ENCODE measurements at regions of chr2 and their contacts with region 1.

Region 1: GRCh38 chr2:60998628-60999545 is 18.6 kb upstream of the PEX13 start:
- DNase-seq: peak; percentile 78
- ATAC-seq: peak; percentile 64
- H3K4me3 ChIP-seq: no peak overlapping the region
- H3K27ac ChIP-seq: no peak overlapping the region
- H3K4me1 ChIP-seq: 0 out of 2 replicates have a peak, but pooled peaks cover 1% of the 10 kb centered on the region
- H3K27me3 ChIP-seq: no peaks in the 10 kb centered on the region
- CTCF ChIP-seq: peak; percentile 80

Region 2: DNA sequence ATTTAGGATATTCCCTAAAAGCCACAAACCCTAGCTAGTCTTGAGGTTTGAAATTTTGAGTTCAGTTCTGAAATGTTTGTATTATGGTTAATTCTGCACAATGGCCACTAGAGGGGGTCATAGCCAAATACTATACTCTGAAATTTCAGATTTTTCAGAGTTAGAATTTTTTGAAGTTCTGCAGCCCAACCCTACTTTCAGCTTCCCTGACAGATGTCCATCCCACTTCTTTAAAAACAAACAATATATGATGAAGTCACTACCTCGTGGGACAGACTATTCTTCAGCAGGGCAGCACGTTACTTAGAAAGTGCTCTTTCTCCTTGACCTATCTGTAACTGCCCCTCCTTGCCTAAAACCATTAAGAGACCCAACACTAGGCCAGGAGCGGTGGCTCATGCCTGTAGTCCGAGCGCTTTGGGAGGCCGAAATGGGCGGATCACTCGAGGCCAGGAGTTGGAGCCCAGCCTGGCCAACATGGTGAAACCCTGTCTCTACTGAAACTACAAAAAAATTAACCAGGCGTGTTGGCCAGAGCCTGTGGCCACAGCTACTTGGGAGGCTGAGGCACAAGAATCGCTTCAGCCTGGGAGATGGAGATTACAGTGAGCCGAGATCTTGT is 291.0 kb before region 1 on chr2:
- CTCF ChIA-PET with region 1: interaction called, 3 read pairs
- POLR2A ChIA-PET with region 1: no interaction called
- intact Hi-C with region 1: loop called (anchors 1 kb)
- DNase-seq: peak; percentile 69
- ATAC-seq: peak; percentile 40
- H3K4me3 ChIP-seq: no peak overlapping the region
- H3K27ac ChIP-seq: no peak overlapping the region
- H3K4me1 ChIP-seq: no peaks in the 10 kb centered on the region
- H3K27me3 ChIP-seq: no peaks in the 10 kb centered on the region
- CTCF ChIP-seq: peak; percentile 87

Region 3: GRCh38 chr2:60794277-60794863 is 204.5 kb before region 1 on chr2:
- CTCF ChIA-PET with region 1: interaction called, 7 read pairs
- POLR2A ChIA-PET with region 1: no interaction called
- intact Hi-C with region 1: loop called (anchors 1 kb)
- DNase-seq: peak; percentile 45
- ATAC-seq: 0 out of 2 replicates have a peak, but pooled peaks have one; percentile 37
- H3K4me3 ChIP-seq: no peak overlapping the region
- H3K27ac ChIP-seq: no peak overlapping the region
- H3K4me1 ChIP-seq: no peaks in the 10 kb centered on the region
- H3K27me3 ChIP-seq: no peaks in the 10 kb centered on the region
- CTCF ChIP-seq: peak; percentile 79

Region 4: GRCh38 chr2:60806988-60807681 is 191.8 kb before region 1 on chr2:
- CTCF ChIA-PET with region 1: interaction called, 23 read pairs
- POLR2A ChIA-PET with region 1: no interaction called
- intact Hi-C with region 1: loop called (anchors 1 kb)
- DNase-seq: peak; percentile 11
- ATAC-seq: peak; percentile 13; the same call in 1 of the 2 replicates
- H3K4me3 ChIP-seq: no peak overlapping the region
- H3K27ac ChIP-seq: no peak overlapping the region
- H3K4me1 ChIP-seq: no peaks in the 10 kb centered on the region
- H3K27me3 ChIP-seq: no peaks in the 10 kb centered on the region
- CTCF ChIP-seq: no peak

Region 5: GRCh38 chr2:61272421-61273070 is 273.7 kb after region 1 on chr2:
- CTCF ChIA-PET with region 1: no interaction called
- POLR2A ChIA-PET with region 1: no interaction called
- intact Hi-C with region 1: no loop called
- DNase-seq: no peak
- ATAC-seq: no peak
- H3K4me3 ChIP-seq: no peak overlapping the region
- H3K27ac ChIP-seq: no peak overlapping the region
- H3K4me1 ChIP-seq: peaks cover 8% of the 10 kb centered on the region
- H3K27me3 ChIP-seq: no peaks in the 10 kb centered on the region
- CTCF ChIP-seq: no peak

Measured in PC-3 (cell line).